Activated T-helper 1 cell treated with anti-CD3 and anti-CD28 coated beads, Interleukin-12 subunit alpha, Interleukin-12 subunit beta, Interleukin-2, Interleukin-4 antibody, amounts not matched to agents 30 ng/mL and 10 ng/mL and 1 ng/mL, durations not matched to agents 14 hours and 24 hours and 36 hours (primary cell): ENCODE measurements at regions of chr6 and their contacts with region 1.

Region 1: DNA sequence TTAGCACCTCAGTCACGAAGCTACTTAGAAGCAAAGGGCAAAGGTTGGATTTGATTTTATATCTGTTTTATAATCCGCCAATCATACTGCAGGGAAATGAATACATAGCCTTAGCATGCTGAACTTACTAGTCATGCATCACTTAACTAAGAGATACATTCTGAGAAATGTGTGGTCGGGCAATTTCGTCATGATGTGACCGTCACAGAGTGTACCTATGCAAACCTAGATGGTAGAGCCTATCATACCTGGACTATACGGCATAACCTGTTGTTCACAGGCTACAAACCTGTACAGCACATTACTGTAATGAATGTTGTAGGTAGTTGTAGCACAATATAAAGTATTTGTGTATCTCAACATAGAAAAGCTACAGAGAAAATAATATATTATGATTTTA is 345.2 kb upstream of the RGS17 start:
- DNase-seq: no peak
- H3K4me3 Mint-ChIP-seq: no peak overlapping the region
- H3K27ac Mint-ChIP-seq: no peak overlapping the region
- H3K4me1 Mint-ChIP-seq: no peaks in the 10 kb centered on the region
- H3K27me3 Mint-ChIP-seq: no peaks in the 10 kb centered on the region

Region 2: DNA sequence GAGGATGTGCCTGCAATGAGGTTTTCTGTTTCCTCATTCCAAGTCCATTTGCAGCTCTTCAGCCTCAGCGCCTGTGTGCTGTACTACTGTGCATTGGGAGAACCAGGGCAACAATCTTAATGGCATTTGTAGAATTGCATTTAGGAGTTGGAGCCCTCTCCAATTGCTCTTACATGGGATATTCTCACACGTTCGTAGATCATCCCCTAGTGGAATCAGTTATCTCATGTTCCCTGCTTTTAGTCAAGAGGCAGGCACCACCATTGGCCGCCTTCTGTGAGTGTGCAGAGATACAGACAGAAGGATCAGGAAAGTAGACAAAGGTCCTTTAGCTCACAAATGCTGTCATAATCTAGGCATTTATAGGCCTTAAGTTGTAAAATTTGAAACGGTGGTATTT is 261.0 kb before region 1 on chr6:
- intact Hi-C with region 1: no loop called
- DNase-seq: no peak
- H3K4me3 Mint-ChIP-seq: no peak overlapping the region
- H3K27ac Mint-ChIP-seq: no peak overlapping the region
- H3K4me1 Mint-ChIP-seq: no peaks in the 10 kb centered on the region
- H3K27me3 Mint-ChIP-seq: peaks cover 3% of the 10 kb centered on the region

Region 3: DNA sequence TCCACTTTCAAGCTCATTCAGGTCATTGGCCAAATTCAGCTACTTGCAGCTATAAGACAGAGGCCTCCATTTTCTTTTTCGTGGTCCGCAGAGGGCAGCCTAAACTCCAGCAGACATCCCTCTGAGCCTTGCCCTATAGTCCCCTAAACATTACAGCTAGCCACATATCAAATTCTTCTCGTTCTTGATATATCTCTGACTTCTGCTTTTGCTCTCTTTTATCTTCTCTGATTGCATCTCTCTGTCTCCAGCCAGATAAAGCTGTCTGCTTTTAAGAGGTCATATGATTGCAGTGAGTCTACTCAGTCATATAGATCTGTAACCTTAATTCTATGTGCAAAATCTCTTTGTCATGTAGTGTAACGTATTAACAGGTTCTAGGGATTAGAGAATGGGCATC is 13.2 kb after region 1 on chr6:
- intact Hi-C with region 1: loop called (anchors 2 kb)
- DNase-seq: no peak
- H3K4me3 Mint-ChIP-seq: no peak overlapping the region
- H3K27ac Mint-ChIP-seq: no peak overlapping the region
- H3K4me1 Mint-ChIP-seq: no peaks in the 10 kb centered on the region
- H3K27me3 Mint-ChIP-seq: no peaks in the 10 kb centered on the region

Region 4: DNA sequence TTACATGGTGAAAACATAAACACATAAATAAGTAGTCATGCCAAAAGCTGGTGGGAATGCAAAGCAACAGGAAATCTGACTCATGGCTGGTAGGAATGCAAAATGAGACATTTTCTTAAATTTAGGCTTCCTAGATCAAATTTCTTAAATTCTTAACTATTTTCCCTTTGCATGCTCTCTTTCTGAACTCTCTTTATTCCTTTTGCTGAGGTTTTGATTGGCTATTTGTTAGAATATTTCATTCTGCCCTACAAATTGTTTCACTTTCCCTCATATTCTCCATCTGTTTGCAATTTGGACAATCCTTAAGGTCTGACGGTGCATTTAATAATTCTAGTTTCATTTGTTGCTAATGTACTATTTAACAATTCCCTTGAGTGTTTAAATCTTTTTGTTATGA is 92.4 kb after region 1 on chr6:
- intact Hi-C with region 1: no loop called
- DNase-seq: no peak
- H3K4me3 Mint-ChIP-seq: no peak overlapping the region
- H3K27ac Mint-ChIP-seq: no peak overlapping the region
- H3K4me1 Mint-ChIP-seq: no peaks in the 10 kb centered on the region
- H3K27me3 Mint-ChIP-seq: no peaks in the 10 kb centered on the region